IMR-90 (cell line): ENCODE measurements at regions of chr2 and their contacts with region 1.

Region 1: DNA sequence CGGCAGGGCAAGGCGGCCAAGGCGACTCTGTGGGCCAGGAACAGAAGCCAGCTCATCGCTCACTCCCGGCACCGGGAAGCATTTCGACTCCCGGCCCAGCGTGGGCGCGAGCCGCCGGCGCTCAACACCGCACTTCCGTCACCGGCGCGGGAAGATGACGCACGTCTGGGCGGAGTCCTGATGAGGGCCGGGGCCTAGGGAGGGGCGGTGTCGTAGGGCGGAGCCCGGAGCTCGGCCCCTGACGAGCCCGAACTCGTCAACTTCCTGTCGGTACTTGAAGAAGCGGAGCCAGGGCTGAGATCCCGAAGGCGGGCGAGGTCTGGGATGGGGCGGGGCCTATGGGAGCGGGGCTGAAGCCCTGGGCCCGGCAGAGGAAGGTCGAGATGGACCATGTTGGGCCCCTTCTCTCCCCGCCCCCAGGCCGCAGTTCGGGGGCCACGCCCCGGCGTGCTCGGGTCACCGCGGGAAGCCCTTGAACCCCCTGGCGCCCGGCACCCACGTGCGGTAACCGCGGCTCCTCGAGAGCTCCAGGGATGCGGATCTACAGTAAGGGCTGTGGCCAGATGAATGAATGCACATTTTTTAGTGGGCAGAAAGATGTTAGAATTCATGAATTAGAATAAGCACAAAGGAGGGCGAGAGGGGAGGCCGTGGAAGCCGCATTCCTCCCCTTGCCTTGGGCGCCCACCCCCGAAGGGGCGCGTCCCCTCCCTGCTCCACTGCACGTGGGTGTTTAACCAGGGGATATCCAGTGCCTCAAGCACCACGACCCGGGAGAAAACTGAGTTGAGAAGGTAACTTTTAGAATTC is at the start of gene RNASEH1:
- DNase-seq: peak; percentile 99
- ATAC-seq: peak; percentile 99
- H3K4me3 ChIP-seq: peak within 1 kb of the TSS; percentile 68
- H3K27ac ChIP-seq: peak within 1 kb of the TSS; percentile 79
- H3K4me1 ChIP-seq: peaks cover 3% of the 10 kb centered on the region; the same call in 1 of the 2 replicates
- H3K27me3 ChIP-seq: no peaks in the 10 kb centered on the region
- CTCF ChIP-seq: no peak
- POLR2A ChIP-seq: peak; percentile 96
- RAD21 ChIP-seq: no peak
- total RNA-seq, gene RNASEH1: 23.7 and 38.3 TPM in 2 replicates

Region 2: DNA sequence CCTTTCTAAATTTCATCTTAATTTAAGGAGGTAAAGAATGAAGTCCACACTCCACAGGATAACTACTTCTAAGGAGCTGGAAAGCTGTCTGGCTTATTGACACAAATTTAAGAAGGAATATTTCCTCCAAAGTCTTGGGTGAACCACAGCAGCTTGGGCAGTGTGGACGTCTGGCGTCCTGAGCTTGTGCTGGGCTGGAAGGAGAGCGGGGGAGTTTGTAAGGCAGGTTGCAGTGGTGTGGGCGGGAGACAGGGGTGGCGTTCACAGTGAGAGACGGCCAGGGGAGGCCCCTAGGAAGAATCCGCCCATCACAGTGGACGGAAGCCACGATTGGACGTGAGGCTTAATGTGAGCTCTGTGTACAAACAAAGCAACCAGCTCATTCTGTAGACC is 64.8 kb before region 1 on chr2:
- CTCF ChIA-PET with region 1: no interaction called
- POLR2A ChIA-PET with region 1: no interaction called
- dilution Hi-C with region 1: no loop called
- in situ Hi-C with region 1: no loop called
- intact Hi-C with region 1: loop called (anchors 2 kb)
- DNase-seq: peak; percentile 75
- ATAC-seq: peak; percentile 88
- H3K4me3 ChIP-seq: no peak overlapping the region
- H3K27ac ChIP-seq: peak overlapping the region; percentile 67; the same call in 1 of the 2 replicates
- H3K4me1 ChIP-seq: peaks cover 6% of the 10 kb centered on the region; the same call in 1 of the 2 replicates
- H3K27me3 ChIP-seq: no peaks in the 10 kb centered on the region
- CTCF ChIP-seq: no peak
- POLR2A ChIP-seq: peak; percentile 56; the same call in 1 of the 2 replicates
- RAD21 ChIP-seq: no peak

Region 3: GRCh38 chr2:3536682-3537632 is 21.5 kb before region 1 on chr2:
- CTCF ChIA-PET with region 1: no interaction called
- POLR2A ChIA-PET with region 1: no interaction called
- dilution Hi-C with region 1: no loop called
- in situ Hi-C with region 1: no loop called
- intact Hi-C with region 1: loop called (anchors 1 kb)
- DNase-seq: peak; percentile 56
- ATAC-seq: peak; percentile 55
- H3K4me3 ChIP-seq: peak overlapping the region; percentile 43
- H3K27ac ChIP-seq: peak overlapping the region; percentile 99
- H3K4me1 ChIP-seq: peaks cover 13% of the 10 kb centered on the region
- H3K27me3 ChIP-seq: no peaks in the 10 kb centered on the region
- CTCF ChIP-seq: peak; percentile 52
- POLR2A ChIP-seq: no peak
- RAD21 ChIP-seq: peak; percentile 34; the same call in 1 of the 2 replicates

Region 4: DNA sequence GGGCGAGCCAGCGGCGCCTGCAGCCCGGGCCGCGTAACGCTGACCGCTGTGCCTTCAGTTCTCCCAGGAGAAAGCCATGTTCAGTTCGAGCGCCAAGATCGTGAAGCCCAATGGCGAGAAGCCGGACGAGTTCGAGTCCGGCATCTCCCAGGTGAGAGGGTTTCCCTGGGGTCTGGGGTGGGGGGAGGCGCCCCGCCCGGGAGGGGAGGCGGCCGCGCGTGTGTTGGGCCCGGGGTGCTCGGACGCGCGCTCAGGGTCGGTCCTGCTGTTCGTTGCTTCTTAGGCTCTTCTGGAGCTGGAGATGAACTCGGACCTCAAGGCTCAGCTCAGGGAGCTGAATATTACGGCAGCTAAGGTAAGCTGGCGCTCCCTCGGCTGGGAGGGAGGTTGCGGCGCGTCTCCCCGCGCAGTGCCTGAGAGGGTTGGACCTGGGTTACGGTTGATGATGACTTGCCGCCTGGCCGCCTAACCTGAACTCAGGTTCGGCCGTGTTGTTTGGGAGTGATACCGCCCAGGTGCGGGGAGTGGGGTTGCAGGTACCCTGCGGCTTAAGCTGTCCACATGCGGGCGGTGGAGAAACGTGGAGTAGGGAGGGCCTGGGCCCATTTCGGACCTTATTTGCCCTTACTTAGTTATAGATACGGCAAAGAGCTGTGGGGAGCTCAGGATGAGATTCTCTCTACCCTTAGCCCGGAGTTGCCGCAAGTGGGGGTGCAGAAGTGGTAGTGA is 17.3 kb after region 1 on chr2:
- CTCF ChIA-PET with region 1: interaction called, 3 read pairs
- POLR2A ChIA-PET with region 1: no interaction called
- dilution Hi-C with region 1: no loop called
- in situ Hi-C with region 1: no loop called
- intact Hi-C with region 1: loop called (anchors 1 kb)
- DNase-seq: no peak
- ATAC-seq: peak; percentile 38
- H3K4me3 ChIP-seq: peak overlapping the region; percentile 98
- H3K27ac ChIP-seq: peak overlapping the region; percentile 77
- H3K4me1 ChIP-seq: peaks cover 2% of the 10 kb centered on the region
- H3K27me3 ChIP-seq: no peaks in the 10 kb centered on the region
- CTCF ChIP-seq: no peak
- POLR2A ChIP-seq: no peak
- RAD21 ChIP-seq: no peak

Region 5: DNA sequence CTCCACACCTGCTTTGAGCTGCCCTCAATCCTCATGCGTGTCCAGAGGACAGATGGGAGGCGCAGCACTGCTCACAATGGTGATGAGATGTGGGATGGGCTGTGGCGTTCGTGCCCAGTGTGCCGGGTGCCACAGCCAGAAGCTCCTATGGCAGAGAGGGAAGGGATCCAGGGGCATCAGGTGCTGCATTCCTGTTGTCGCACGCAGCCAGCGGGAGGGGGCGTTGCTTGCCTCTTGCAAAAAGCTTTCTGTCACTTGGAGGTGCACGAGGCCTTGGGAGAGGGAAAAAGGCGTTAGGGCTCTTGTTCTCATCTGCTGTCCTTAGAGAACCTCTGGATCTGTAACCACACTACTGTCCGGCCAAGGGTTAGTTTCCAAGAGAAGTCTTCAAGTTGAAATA is 70.4 kb after region 1 on chr2:
- CTCF ChIA-PET with region 1: no interaction called
- POLR2A ChIA-PET with region 1: no interaction called
- dilution Hi-C with region 1: no loop called
- in situ Hi-C with region 1: no loop called
- intact Hi-C with region 1: no loop called
- DNase-seq: no peak
- ATAC-seq: no peak
- H3K4me3 ChIP-seq: no peak overlapping the region
- H3K27ac ChIP-seq: no peak overlapping the region
- H3K4me1 ChIP-seq: peaks cover 15% of the 10 kb centered on the region; the same call in 1 of the 2 replicates
- H3K27me3 ChIP-seq: no peaks in the 10 kb centered on the region
- CTCF ChIP-seq: 0 out of 2 replicates have a peak, but pooled peaks have one; percentile 8
- POLR2A ChIP-seq: no peak
- RAD21 ChIP-seq: no peak